ENCODE measurements at regions of chr17 and their contacts with region 1.

Region 1: GRCh38 chr17:5468075-5468473 is 708 bp downstream of the DHX33 start:
- DNase-seq: peak in 3 of 14 experiments; percentile 1 to 38 (median 37)
- ATAC-seq: peak; percentile 39
- H3K4me3 ChIP-seq: peak overlapping the region; percentile 86
- H3K4me3 Mint-ChIP-seq: peak overlapping the region; percentile 69
- H3K27ac ChIP-seq: no peak overlapping the region
- H3K27ac Mint-ChIP-seq: peak overlapping the region; percentile 0
- H3K4me1 ChIP-seq: peaks cover 24% of the 10 kb centered on the region
- H3K4me1 Mint-ChIP-seq: peaks cover 43% of the 10 kb centered on the region
- H3K27me3 ChIP-seq: no peaks in the 10 kb centered on the region
- H3K27me3 Mint-ChIP-seq: no peaks in the 10 kb centered on the region
- CTCF ChIP-seq: no peak

Region 2: GRCh38 chr17:5413682-5414081 is 54.4 kb before region 1 on chr17:
- CTCF ChIA-PET with region 1: no interaction called
- POLR2A ChIA-PET with region 1: no interaction called
- intact Hi-C with region 1: no loop called
- DNase-seq: no peak
- ATAC-seq: no peak
- H3K4me3 ChIP-seq: no peak overlapping the region
- H3K4me3 Mint-ChIP-seq: no peak overlapping the region
- H3K27ac ChIP-seq: no peak overlapping the region
- H3K27ac Mint-ChIP-seq: no peak overlapping the region
- H3K4me1 ChIP-seq: peaks cover 21% of the 10 kb centered on the region
- H3K4me1 Mint-ChIP-seq: peaks cover 55% of the 10 kb centered on the region
- H3K27me3 ChIP-seq: no peaks in the 10 kb centered on the region
- H3K27me3 Mint-ChIP-seq: no peaks in the 10 kb centered on the region
- CTCF ChIP-seq: no peak

Region 3: DNA sequence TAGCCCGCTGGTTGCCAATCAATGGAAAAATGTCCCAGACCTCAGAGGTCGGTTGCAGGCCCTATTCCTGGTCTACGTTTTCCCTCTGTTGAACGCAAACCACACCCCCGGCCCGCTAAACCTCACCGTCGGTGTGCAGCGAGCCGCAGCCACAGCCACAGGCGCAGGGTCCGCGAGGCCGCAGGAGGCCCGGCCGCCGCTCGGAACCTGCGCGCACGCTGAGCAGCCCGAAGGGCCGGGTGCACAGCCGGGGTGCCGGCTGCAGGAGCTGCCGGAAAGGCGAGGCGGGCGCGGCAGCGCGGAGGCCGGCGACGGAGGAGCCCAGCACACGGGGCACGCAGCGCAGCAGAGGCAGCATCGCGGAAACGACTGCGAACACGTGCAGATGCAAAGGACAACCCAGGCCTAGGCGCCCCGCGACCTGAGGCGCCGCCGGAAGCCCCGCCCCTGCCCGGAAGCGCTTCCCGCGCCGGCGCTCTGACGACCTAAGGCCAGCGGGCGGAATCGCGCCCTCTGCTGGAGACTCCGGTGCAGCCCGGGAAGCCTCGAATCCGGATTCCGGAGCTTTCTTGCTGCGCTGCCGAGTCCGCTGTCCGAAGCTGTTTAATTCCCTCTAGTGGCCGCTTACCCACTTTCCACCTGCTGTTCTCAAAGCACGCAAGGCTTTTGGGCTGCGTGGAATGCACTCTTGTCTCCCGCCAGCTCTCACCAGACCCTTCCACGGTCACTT is 29.2 kb before region 1 on chr17 and contains the start of gene C1QBP:
- CTCF ChIA-PET with region 1: interaction called, 21 read pairs
- POLR2A ChIA-PET with region 1: interaction called, 7 read pairs
- intact Hi-C with region 1: loop called (anchors 1 to 2 kb)
- DNase-seq: peak; percentile 85 to 97 (median 91)
- ATAC-seq: peak; percentile 93
- H3K4me3 ChIP-seq: peak within 1 kb of the TSS; percentile 70
- H3K4me3 Mint-ChIP-seq: peak within 1 kb of the TSS; percentile 89
- H3K27ac ChIP-seq: peak within 1 kb of the TSS; percentile 71 to 74
- H3K27ac Mint-ChIP-seq: peak within 1 kb of the TSS; percentile 86
- H3K4me1 ChIP-seq: peaks cover 33% of the 10 kb centered on the region
- H3K4me1 Mint-ChIP-seq: peaks cover 35% of the 10 kb centered on the region
- H3K27me3 ChIP-seq: no peaks in the 10 kb centered on the region
- H3K27me3 Mint-ChIP-seq: no peaks in the 10 kb centered on the region
- CTCF ChIP-seq: peak; percentile 96
- total RNA-seq, gene C1QBP: 59.9 to 62.9 TPM

Region 4: DNA sequence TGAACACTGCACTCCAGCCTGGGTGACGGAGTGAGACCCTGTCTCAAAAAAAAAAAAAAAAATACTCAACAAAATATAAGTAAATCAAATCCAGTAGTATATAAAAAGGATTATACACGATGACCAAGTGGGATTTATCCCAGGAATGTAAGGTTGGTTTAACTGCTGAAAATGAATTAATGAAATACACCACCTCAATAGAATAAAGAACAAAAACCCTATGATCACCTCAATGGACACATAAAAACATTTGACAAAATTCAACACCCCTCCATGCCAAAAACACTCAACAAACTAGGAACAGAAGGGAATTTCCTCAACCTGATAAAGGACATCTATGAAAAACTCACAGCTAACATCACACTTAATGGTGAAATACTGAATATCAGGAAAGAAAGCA is 24.9 kb after region 1 on chr17:
- CTCF ChIA-PET with region 1: no interaction called
- POLR2A ChIA-PET with region 1: no interaction called
- intact Hi-C with region 1: no loop called
- DNase-seq: no peak
- ATAC-seq: no peak
- H3K4me3 ChIP-seq: no peak overlapping the region
- H3K4me3 Mint-ChIP-seq: no peak overlapping the region
- H3K27ac ChIP-seq: no peak overlapping the region
- H3K27ac Mint-ChIP-seq: no peak overlapping the region
- H3K4me1 ChIP-seq: no peaks in the 10 kb centered on the region
- H3K4me1 Mint-ChIP-seq: peaks cover 5% of the 10 kb centered on the region
- H3K27me3 ChIP-seq: no peaks in the 10 kb centered on the region
- H3K27me3 Mint-ChIP-seq: no peaks in the 10 kb centered on the region
- CTCF ChIP-seq: no peak